ENCODE measurements at regions of chr2 and their contacts with region 1.

Region 1: GRCh38 chr2:119174216-119175037 is 15.9 kb upstream of the C1QL2 start:
- DNase-seq: peak in 1 of 2 experiments; percentile 91
- H3K4me3 ChIP-seq: no peak overlapping the region
- H3K27ac ChIP-seq: no peak overlapping the region
- H3K4me1 ChIP-seq: no peaks in the 10 kb centered on the region; a peak in 1 of 7 replicates
- H3K27me3 ChIP-seq: no peaks in the 10 kb centered on the region
- CTCF ChIP-seq: peak; percentile 87 to 92 (median 88)
- EP300 ChIP-seq: no peak
- POLR2A ChIP-seq: no peak
- RAD21 ChIP-seq: peak; percentile 66 to 81

Region 2: DNA sequence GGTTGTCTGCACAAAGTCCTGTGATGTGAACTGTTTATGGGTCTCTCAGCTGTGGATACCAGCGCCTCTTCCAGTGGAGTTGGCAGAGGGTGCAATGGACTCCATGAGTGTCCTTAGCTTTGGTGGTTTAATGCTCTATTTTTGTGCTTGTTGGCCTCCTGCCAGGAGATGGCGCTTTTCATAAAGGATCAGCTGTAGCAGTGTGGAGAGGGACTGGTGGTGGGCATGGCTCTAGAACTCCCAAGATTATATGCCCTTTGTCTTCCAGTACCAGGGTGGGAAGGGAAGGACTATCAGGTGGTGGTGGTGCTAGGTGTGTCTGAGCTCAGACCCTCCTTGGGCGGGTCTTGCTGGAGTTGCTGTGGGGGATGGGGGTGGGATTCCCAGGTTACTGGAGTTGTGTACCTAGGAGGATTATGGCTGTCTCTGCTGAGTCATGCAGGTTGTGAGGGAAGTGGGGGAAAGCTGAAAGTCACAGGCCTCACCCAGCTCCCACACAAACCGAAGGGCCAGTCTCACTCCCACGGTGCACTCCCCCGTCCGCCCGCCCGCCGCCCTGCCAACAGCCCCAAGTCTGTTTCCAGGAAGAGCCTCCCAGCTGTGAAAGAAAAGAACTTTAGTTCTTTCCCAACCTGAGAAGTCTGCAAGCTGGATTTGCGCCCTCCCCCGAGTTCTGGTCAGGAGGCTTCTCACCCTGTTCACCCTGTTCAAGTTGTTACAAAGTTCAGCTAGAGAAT is 124.3 kb before region 1 on chr2:
- CTCF ChIA-PET with region 1: interaction called, 12 read pairs
- POLR2A ChIA-PET with region 1: no interaction called
- DNase-seq: peak in 1 of 2 experiments; percentile 79
- H3K4me3 ChIP-seq: no peak overlapping the region
- H3K27ac ChIP-seq: no peak overlapping the region
- H3K4me1 ChIP-seq: peaks cover 0 to 4% (median 2%) of the 10 kb centered on the region in 4 experiments; a peak in 3 of 7 replicates
- H3K27me3 ChIP-seq: no peaks in the 10 kb centered on the region
- CTCF ChIP-seq: peak; percentile 39 to 71 (median 68)
- EP300 ChIP-seq: no peak
- POLR2A ChIP-seq: no peak
- RAD21 ChIP-seq: peak; percentile 57 to 62

Region 3: GRCh38 chr2:119147776-119148715 is 26.4 kb before region 1 on chr2:
- CTCF ChIA-PET with region 1: interaction called, 10 read pairs
- POLR2A ChIA-PET with region 1: no interaction called
- DNase-seq: no peak
- H3K4me3 ChIP-seq: no peak overlapping the region
- H3K27ac ChIP-seq: no peak overlapping the region
- H3K4me1 ChIP-seq: peaks cover 0 to 7% (median 2%) of the 10 kb centered on the region in 4 experiments; a peak in 3 of 7 replicates
- H3K27me3 ChIP-seq: no peaks in the 10 kb centered on the region; a peak in 2 of 7 replicates
- CTCF ChIP-seq: no peak
- EP300 ChIP-seq: no peak
- POLR2A ChIP-seq: no peak
- RAD21 ChIP-seq: no peak

Region 4: GRCh38 chr2:119184512-119184911 is 10.1 kb after region 1 on chr2:
- CTCF ChIA-PET with region 1: interaction called, 25 read pairs
- POLR2A ChIA-PET with region 1: no interaction called
- DNase-seq: no peak
- H3K4me3 ChIP-seq: no peak overlapping the region
- H3K27ac ChIP-seq: no peak overlapping the region
- H3K4me1 ChIP-seq: no peaks in the 10 kb centered on the region
- H3K27me3 ChIP-seq: no peaks in the 10 kb centered on the region
- CTCF ChIP-seq: no peak
- EP300 ChIP-seq: no peak
- POLR2A ChIP-seq: no peak
- RAD21 ChIP-seq: no peak

Region 5: DNA sequence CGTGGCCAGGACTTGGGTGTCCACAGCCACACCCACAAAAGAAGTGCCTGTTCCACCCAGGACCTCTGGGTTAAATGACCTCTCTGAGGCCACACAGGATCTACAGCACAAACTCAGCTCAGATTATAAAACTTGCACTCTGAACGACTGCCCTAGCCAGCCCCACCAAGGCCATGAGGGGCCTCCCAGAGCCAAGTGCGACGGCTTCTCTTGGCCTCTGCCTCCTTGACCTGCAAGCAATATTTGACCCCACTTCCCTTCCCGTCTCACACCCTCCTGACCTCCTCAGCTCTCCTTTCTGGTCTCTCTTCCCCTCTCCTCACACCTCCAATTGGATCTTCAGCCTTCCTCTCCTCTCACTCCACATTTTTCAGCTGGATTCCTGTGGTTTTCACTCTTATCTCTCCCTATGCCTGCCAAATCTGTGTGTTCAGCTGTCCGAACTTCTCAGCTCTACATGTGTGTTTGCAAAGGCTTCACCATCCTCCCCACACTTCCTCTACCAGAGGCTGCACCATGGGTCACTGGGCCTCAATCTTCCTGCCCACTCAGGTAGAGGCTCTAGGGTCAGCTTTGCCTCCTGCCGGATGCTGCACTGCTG is 23.9 kb after region 1 on chr2:
- CTCF ChIA-PET with region 1: interaction called, 23 read pairs
- POLR2A ChIA-PET with region 1: interaction called, 3 read pairs
- DNase-seq: no peak
- H3K4me3 ChIP-seq: no peak overlapping the region
- H3K27ac ChIP-seq: no peak overlapping the region
- H3K4me1 ChIP-seq: peaks cover 3 to 14% (median 7%) of the 10 kb centered on the region in 4 experiments; a peak in 5 of 7 replicates
- H3K27me3 ChIP-seq: no peaks in the 10 kb centered on the region; a peak in 1 of 7 replicates
- CTCF ChIP-seq: no peak
- EP300 ChIP-seq: no peak
- POLR2A ChIP-seq: no peak
- RAD21 ChIP-seq: no peak